Uterus (tissue), 4 donors: ENCODE measurements at regions of chr11 and their contacts with region 1.

Region 1: DNA sequence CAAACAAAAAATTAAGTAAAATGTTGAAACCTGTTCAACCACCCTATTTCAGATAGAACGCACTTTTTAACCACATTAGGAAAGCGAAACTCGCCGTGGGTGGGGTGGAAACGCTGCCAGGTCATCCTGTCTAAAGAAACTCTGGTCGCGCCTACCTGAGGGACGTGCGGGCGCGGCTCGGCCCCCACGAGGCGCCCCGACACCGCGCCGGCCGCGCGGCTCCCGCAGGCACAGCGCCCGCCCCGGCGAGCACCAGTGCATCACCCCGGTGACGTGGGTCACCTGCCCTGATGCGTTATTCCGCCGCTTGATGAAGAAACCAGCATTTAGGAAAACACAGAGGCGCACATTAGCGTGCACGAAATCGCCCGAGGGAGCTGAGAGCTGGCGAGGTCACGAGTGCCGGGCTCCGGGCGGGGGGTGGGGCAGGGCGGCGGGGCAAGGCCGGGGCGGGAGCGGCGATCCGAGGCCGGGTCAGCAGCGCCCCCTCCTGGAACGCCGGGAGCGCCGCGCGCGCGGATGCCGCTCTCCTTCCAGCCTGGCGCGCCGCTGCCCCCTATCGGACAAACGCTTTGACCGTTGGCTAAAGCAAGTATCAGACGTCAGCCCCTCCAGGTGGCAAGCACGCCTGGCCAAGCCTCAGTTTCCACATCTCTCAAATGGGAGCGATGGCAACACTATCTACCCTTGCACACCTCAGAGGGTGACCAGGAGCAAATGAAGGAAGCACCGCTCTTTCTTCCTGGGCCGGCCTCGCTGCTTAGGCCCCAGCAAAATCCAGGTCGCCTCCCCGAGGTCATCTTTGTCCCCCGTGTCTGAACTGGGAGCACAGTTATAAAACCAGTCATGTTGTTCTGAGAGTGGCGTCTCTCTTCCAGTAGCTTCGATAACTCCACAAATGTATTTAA is 15.7 kb upstream of the SNX32 start:
- DNase-seq: peak; percentile 94 to 95
- H3K4me3 ChIP-seq: peak overlapping the region; percentile 39 to 81
- H3K27ac ChIP-seq: peak overlapping the region; percentile 82 to 83
- H3K4me1 ChIP-seq: no peaks in the 10 kb centered on the region
- H3K27me3 ChIP-seq: no peaks in the 10 kb centered on the region
- CTCF ChIP-seq: peak; percentile 99 to 100 (median 99)
- POLR2A ChIP-seq: peak in 1 of 2 donors; percentile 6

Region 2: DNA sequence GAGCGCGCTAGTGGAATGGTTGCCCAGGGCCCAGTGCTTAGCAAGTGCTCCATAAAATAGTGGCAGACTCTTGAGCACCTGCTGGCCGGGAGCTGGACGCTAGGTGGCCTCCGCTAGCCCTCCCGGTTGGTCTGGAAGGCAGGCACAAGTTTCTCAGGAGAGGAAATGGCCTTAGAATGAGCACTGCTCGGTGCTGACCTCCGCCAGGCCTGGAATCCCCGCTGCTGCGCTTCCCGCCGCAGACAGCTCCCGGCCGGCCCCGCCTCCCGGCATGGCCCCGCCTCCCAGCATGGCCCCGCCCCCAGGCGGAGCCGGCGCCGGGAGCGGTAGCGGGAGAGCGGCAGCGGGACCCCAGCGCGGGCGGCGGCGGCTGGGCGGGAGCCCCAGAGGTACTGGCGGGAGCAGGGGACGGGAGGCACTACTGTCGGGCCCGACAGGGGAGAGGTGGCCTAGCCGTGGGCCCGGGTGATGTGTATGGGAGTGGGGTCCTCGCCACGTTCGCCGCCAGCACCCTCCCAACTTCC is 180.2 kb before region 1 on chr11 and contains the start of gene SIPA1:
- intact Hi-C with region 1: loop called (anchors 10 kb)
- DNase-seq: peak; percentile 78 to 83
- H3K4me3 ChIP-seq: peak within 1 kb of the TSS; percentile 53 to 60
- H3K27ac ChIP-seq: peak within 1 kb of the TSS; percentile 81 to 84
- H3K4me1 ChIP-seq: peaks cover 0 to 15% of the 10 kb centered on the region in 2 donors
- H3K27me3 ChIP-seq: no peaks in the 10 kb centered on the region
- CTCF ChIP-seq: peak in 3 of 4 experiments; percentile 27 to 59 (median 39)
- POLR2A ChIP-seq: peak; percentile 71 to 77
- total RNA-seq, gene SIPA1: 11.2 to 60.1 (median 27.0) TPM

Region 3: DNA sequence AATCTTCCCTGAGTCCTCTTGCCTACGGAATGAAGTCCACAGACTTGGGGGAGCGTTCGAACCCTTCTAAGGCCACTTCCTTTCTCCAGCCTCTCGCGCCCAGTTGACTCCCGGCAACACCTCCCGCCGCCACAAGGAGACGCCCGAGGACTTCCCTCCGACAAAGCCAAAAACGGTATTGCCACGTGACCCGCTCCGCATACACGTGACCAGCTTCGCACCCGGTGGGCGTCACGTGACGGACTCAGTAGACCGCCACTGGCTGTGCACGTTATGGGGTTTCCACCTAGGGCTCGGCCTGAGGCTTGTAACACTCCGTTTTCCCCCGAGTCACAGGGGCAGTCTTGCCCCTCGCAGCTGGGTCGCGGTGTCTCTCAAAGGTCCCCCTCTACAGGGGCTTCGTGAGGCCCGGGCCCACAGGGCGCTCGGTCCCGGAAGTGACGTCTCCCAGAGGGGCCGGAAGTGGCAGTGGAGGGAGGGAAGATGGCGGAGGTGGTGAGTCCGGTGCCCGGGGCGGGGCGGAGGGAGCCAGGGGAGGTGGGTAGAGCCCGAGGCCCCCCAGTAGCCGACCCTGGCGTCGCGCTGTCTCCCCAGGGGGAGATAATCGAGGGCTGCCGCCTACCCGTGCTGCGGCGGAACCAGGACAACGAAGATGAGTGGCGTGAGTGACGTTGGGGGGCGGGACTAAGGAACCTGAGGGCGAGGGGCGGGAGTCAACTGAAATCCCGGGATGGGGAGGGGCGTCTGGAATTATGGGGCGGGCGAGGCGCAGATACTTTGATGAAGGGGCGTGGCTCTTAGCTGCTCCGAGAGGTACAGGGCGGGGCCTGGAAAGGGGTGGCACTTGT is 106.1 kb before region 1 on chr11 and contains the start of gene KAT5:
- intact Hi-C with region 1: loop called (anchors 5 kb)
- DNase-seq: peak; percentile 98 to 99
- H3K4me3 ChIP-seq: peak within 1 kb of the TSS; percentile 57 to 74
- H3K27ac ChIP-seq: peak within 1 kb of the TSS; percentile 94 to 98
- H3K4me1 ChIP-seq: peaks cover 0 to 8% of the 10 kb centered on the region in 2 donors
- H3K27me3 ChIP-seq: no peaks in the 10 kb centered on the region
- CTCF ChIP-seq: peak; percentile 95 to 99 (median 98)
- POLR2A ChIP-seq: peak; percentile 76 to 89
- total RNA-seq, gene KAT5: 37.1 to 113 (median 81.5) TPM

Region 4: DNA sequence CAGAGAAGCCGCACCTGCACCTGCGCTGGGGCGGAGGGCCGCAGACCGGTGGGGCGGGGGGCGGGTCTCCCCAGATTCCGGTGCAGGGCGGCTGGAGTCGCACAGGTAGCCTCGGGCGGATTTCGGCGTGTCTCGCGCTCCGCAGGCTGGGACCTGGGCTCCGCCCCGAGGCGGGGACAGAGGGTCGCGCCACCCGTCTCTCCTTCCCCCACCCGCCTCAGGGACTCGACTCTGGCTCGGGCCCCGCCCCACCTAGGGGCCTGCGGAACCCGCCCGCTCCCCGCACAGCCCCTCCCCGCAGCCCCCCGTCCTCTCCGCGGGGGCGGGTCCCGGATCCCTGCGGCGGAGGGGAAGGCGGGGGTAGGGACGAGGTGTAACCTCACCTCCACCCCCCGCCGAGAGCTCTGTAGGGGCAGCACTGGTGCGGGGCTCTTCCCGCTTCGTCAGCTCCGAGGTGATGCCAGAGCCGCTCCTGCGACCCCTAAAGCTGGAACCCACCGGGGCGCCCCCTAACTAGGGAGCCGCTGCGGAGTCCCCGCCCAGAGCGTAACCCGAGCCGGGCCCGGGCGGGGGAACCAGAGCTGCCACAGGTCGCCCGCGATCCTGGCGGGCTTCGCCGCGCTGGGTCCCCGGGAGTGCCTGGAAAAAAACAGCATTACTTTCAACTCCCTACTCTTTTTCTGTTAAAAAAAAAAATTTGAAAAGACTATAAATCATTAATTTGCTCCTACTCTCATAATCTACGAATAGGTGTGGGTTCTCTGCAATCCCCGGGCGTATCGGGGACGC is 553.7 kb after region 1 on chr11 and contains the start of gene SLC29A2:
- intact Hi-C with region 1: no loop called
- DNase-seq: no peak
- H3K4me3 ChIP-seq: peak within 1 kb of the TSS; percentile 45 to 50
- H3K27ac ChIP-seq: peak within 1 kb of the TSS in 1 of 2 donors; percentile 46
- H3K4me1 ChIP-seq: peaks cover 0 to 6% of the 10 kb centered on the region in 2 donors
- H3K27me3 ChIP-seq: peaks cover 19 to 35% of the 10 kb centered on the region in 2 donors
- CTCF ChIP-seq: no peak
- POLR2A ChIP-seq: no peak
- total RNA-seq, gene SLC29A2: 0.26 to 3.5 (median 1.5) TPM in 3 of 4 donors, not detected in the other